ENCODE measurements at regions of chr2 and their contacts with region 1.

Region 1: GRCh38 chr2:86623651-86624541 is at the start of gene RNF103:
- DNase-seq: peak; percentile 88 to 91 (median 89)
- H3K4me3 ChIP-seq: peak within 1 kb of the TSS; percentile 58 to 59
- H3K4me3 Mint-ChIP-seq: peak within 1 kb of the TSS; percentile 94 to 98 (median 95)
- H3K27ac ChIP-seq: peak within 1 kb of the TSS; percentile 92
- H3K27ac Mint-ChIP-seq: peak within 1 kb of the TSS; percentile 88 to 99 (median 95)
- H3K4me1 ChIP-seq: peaks cover 35% of the 10 kb centered on the region
- H3K4me1 Mint-ChIP-seq: peaks cover 25 to 42% (median 32%) of the 10 kb centered on the region in 4 donors
- H3K27me3 ChIP-seq: no peaks in the 10 kb centered on the region
- H3K27me3 Mint-ChIP-seq: peaks cover 0 to 3% of the 10 kb centered on the region in 2 donors
- total RNA-seq, gene RNF103: 33.7 to 35.0 TPM

Region 2: GRCh38 chr2:85308896-85309555 is 1314.9 kb before region 1 on chr2:
- CTCF ChIA-PET with region 1: no interaction called
- POLR2A ChIA-PET with region 1: no interaction called
- intact Hi-C with region 1: no loop called
- DNase-seq: peak in 1 of 5 donors; percentile 41
- H3K4me3 ChIP-seq: peak overlapping the region in 1 of 2 donors; percentile 14
- H3K4me3 Mint-ChIP-seq: peak overlapping the region; percentile 80 to 95 (median 87)
- H3K27ac ChIP-seq: peak overlapping the region; percentile 46
- H3K27ac Mint-ChIP-seq: peak overlapping the region; percentile 73 to 97 (median 97)
- H3K4me1 ChIP-seq: peaks cover 36% of the 10 kb centered on the region
- H3K4me1 Mint-ChIP-seq: peaks cover 19 to 48% (median 39%) of the 10 kb centered on the region in 4 donors
- H3K27me3 ChIP-seq: no peaks in the 10 kb centered on the region
- H3K27me3 Mint-ChIP-seq: peaks cover 0 to 2% of the 10 kb centered on the region in 2 donors

Region 3: DNA sequence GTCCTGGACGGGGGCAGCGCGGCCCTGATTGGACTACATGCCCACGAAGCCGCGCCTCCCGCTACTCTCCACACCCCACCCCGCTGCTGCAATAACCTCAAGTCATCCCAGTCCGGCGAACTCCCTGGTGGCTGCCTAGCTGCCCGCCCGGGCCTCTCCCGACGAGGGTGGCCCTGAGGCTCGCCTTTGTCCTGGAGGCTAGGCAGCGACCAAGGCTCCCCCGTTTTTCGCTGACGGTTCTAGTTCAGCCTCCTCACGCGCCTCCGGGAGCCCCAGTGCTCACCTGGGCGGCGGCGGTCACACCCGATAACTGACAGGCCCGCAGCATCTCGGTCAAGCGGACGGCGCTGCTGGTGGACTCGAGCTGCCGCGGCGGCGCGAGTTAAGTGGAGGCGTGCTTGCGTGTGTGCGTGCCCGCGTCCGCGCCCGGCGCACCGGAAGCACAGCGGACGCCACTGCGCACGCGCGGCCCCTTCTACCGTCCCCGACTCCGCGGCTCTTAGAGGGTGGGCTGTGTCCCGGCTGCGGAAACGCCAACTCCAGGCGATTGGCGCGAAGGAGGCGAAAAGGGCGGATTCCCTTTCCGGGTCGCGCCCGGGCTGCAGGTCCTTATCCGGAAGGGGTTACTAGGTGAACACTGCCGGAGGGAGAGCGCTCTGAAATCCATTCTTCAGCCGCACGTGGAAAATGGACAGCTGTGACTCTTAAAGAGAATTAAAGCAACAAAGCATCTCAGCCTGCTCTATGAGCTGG is 428.7 kb before region 1 on chr2 and contains the start of gene IMMT:
- CTCF ChIA-PET with region 1: no interaction called
- POLR2A ChIA-PET with region 1: interaction called, 5 read pairs
- intact Hi-C with region 1: loop called (anchors 5 kb)
- DNase-seq: peak; percentile 92 to 95 (median 95)
- H3K4me3 ChIP-seq: peak within 1 kb of the TSS; percentile 27 to 100
- H3K4me3 Mint-ChIP-seq: peak within 1 kb of the TSS; percentile 90 to 97 (median 96)
- H3K27ac ChIP-seq: peak within 1 kb of the TSS; percentile 89
- H3K27ac Mint-ChIP-seq: peak within 1 kb of the TSS; percentile 83 to 98 (median 96)
- H3K4me1 ChIP-seq: peaks cover 57% of the 10 kb centered on the region
- H3K4me1 Mint-ChIP-seq: peaks cover 34 to 75% (median 55%) of the 10 kb centered on the region in 4 donors
- H3K27me3 ChIP-seq: no peaks in the 10 kb centered on the region
- H3K27me3 Mint-ChIP-seq: no peaks in the 10 kb centered on the region
- total RNA-seq, gene IMMT: 77.2 to 82.7 TPM

Region 4: DNA sequence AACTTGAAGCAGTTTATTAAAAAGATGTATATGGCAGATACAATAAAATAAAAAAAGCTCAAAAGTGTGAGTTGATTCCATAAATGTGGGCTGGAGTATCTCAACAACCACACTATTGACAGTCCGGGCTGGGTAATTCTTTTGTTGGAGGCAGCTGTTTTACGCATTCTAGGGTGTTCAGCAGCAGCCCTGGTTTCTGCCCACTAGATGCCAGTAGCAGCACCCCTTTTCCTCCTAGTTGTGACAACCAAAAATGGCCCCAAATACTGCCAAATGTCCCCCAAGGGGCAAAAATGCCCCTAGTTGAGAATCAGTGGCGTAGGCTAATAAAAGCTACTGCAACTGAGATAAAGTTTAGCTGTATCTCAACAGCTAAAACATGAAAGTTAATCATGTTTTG is 105.4 kb before region 1 on chr2:
- CTCF ChIA-PET with region 1: interaction called, 12 read pairs
- POLR2A ChIA-PET with region 1: interaction called, 5 read pairs
- intact Hi-C with region 1: loop called (anchors 2 kb)
- DNase-seq: peak; percentile 36 to 43 (median 42)
- H3K4me3 ChIP-seq: no peak overlapping the region
- H3K4me3 Mint-ChIP-seq: no peak overlapping the region
- H3K27ac ChIP-seq: no peak overlapping the region
- H3K27ac Mint-ChIP-seq: peak overlapping the region in 1 of 7 donors; percentile 18
- H3K4me1 ChIP-seq: no peaks in the 10 kb centered on the region
- H3K4me1 Mint-ChIP-seq: peaks cover 0 to 11% (median 3%) of the 10 kb centered on the region in 4 donors
- H3K27me3 ChIP-seq: no peaks in the 10 kb centered on the region
- H3K27me3 Mint-ChIP-seq: no peaks in the 10 kb centered on the region

Region 5: DNA sequence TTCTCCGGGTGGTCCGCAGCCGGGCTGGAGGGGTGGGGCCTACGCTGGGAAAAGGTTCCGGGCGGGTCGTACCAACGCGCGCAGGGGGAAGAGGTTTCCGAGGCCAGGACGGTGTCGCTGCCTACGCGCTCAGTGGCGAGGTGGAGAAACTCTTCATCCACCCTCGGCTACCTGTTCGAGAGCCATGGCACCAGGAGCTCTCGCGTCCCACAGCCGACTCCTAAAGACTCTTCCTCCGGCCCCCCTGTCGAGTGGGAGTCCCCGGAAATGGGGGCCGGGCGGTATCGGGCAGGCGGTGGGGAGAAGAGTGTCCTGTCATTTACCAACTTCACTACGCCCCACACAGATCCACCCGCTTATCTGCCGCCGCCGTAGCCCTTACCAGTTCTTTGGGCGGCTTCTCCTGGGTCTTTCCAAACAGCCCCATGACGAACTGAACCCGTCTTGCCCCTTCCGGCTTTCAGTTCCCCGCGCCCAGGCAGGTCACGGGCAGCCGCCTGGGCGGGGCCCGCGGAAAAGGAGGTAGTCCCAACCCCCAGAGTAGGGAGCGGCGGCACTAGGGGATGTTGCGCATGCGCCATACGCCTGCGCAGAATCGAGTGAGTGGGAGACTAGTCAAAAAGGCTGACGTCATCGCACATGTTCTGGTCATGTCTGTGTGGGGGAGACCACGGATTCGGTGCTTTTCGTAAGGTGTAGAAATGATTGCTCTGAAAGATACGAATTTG is 60.8 kb before region 1 on chr2 and contains the start of gene CHMP3:
- CTCF ChIA-PET with region 1: no interaction called
- POLR2A ChIA-PET with region 1: interaction called, 61 read pairs
- intact Hi-C with region 1: loop called (anchors 1 kb)
- DNase-seq: peak; percentile 97 to 98 (median 98)
- H3K4me3 ChIP-seq: peak within 1 kb of the TSS; percentile 85 to 91
- H3K4me3 Mint-ChIP-seq: peak within 1 kb of the TSS; percentile 95 to 98 (median 98)
- H3K27ac ChIP-seq: peak within 1 kb of the TSS; percentile 99
- H3K27ac Mint-ChIP-seq: peak within 1 kb of the TSS; percentile 94 to 99 (median 99)
- H3K4me1 ChIP-seq: peaks cover 42% of the 10 kb centered on the region
- H3K4me1 Mint-ChIP-seq: peaks cover 0 to 38% (median 31%) of the 10 kb centered on the region in 4 donors
- H3K27me3 ChIP-seq: no peaks in the 10 kb centered on the region
- H3K27me3 Mint-ChIP-seq: peaks cover 0 to 4% of the 10 kb centered on the region in 2 donors
- total RNA-seq, gene CHMP3: 83.3 to 83.6 TPM

Region 6: GRCh38 chr2:86584151-86584913 is 39.6 kb before region 1 on chr2:
- CTCF ChIA-PET with region 1: interaction called, 3 read pairs
- POLR2A ChIA-PET with region 1: interaction called, 27 read pairs
- intact Hi-C with region 1: loop called (anchors 5 kb)
- DNase-seq: peak; percentile 26 to 48 (median 35)
- H3K4me3 ChIP-seq: no peak overlapping the region
- H3K4me3 Mint-ChIP-seq: peak overlapping the region in 6 of 8 donors; percentile 31 to 74 (median 59)
- H3K27ac ChIP-seq: no peak overlapping the region
- H3K27ac Mint-ChIP-seq: peak overlapping the region; percentile 73 to 95 (median 84)
- H3K4me1 ChIP-seq: peaks cover 24% of the 10 kb centered on the region
- H3K4me1 Mint-ChIP-seq: peaks cover 17 to 28% (median 22%) of the 10 kb centered on the region in 4 donors
- H3K27me3 ChIP-seq: no peaks in the 10 kb centered on the region
- H3K27me3 Mint-ChIP-seq: peaks cover 0 to 1% of the 10 kb centered on the region in 2 donors

Measured in CD4-positive, alpha-beta memory T cell (primary cell).